ENCODE measurements at regions of chr16 and their contacts with region 1.

Region 1: DNA sequence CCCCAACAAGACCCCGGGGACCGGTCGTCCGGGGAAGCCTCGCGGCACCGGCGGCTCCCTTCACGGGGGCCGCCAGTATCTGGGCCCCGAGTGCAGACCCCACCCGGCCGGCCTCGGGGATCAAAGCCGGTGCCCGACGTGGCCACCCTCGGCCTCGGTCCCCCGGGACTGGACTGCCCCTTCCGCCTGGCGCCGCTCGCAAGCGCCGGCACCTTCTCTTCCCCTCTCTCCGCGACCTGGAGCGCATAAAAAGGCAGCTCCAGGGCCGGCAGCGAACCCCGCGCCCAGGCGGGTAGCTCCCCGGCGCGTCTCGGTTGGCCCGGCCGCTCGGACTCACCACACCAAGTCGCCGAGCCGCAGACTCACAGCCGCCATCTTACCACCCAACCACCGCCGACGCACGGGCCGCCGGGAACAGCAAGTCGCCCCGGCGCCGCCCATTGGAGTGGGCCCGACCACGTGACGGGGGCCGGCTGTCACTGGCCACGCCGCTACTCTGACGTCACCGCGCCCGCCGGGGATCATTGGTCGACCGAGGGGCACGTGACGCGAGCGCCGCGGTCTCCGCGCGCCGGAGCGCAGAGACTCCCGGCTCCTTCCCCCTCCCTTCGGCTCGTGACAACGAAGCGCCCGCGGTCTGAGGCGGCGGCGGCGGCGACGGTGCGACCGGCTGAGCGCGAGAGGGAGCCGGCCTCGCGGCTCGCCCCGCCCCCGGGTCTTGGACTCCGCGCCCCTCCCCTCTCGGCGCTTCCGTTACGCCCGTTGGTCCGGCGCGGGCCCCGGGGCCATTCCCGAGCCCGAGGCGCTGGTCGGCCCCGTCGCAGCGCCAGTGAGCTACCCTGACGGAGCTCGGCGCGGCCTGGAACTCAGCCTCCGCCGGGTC is at the starts of genes GLYR1 and UBN1:
- DNase-seq: peak; percentile 100
- H3K4me3 ChIP-seq: peak within 1 kb of the TSS; percentile 78 to 99 (median 90)
- H3K27ac ChIP-seq: peak within 1 kb of the TSS; percentile 99 to 100 (median 100)
- H3K4me1 ChIP-seq: peaks cover 26 to 57% (median 42%) of the 10 kb centered on the region in 4 donors
- H3K27me3 ChIP-seq: no peaks in the 10 kb centered on the region
- CTCF ChIP-seq: no peak
- EP300 ChIP-seq: no peak
- POLR2A ChIP-seq: peak; percentile 86
- total RNA-seq, gene GLYR1: 50.2 to 88.4 (median 74.0) TPM
- total RNA-seq, gene UBN1: 33.6 to 60.2 (median 53.0) TPM

Region 2: DNA sequence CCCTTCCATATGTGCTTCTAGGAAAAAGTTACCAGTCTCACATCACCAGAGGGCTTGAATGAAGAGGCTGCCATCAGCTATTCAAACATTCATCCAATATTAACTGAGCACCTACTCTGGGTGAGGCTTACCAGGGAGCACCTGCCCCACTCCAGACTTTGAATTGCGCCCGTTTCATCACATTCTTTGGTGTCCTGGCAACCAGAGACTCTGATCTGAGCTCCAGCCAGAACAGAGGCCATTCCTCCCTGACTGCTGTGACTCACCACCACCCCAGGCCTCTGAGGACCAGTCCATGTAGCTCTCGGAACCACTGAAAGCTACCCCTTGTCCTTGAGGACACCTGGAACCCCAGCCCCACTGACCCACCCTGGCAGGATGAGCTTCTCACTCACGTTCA is 291.0 kb before region 1 on chr16 and contains the start of gene C16orf96:
- in situ Hi-C with region 1: no loop called
- intact Hi-C with region 1: no loop called
- DNase-seq: no peak
- H3K4me3 ChIP-seq: no peak within 1 kb of the TSS
- H3K27ac ChIP-seq: no peak within 1 kb of the TSS
- H3K4me1 ChIP-seq: no peaks in the 10 kb centered on the region
- H3K27me3 ChIP-seq: no peaks in the 10 kb centered on the region
- CTCF ChIP-seq: no peak
- EP300 ChIP-seq: no peak
- POLR2A ChIP-seq: no peak
- total RNA-seq, gene C16orf96: not detected

Region 3: DNA sequence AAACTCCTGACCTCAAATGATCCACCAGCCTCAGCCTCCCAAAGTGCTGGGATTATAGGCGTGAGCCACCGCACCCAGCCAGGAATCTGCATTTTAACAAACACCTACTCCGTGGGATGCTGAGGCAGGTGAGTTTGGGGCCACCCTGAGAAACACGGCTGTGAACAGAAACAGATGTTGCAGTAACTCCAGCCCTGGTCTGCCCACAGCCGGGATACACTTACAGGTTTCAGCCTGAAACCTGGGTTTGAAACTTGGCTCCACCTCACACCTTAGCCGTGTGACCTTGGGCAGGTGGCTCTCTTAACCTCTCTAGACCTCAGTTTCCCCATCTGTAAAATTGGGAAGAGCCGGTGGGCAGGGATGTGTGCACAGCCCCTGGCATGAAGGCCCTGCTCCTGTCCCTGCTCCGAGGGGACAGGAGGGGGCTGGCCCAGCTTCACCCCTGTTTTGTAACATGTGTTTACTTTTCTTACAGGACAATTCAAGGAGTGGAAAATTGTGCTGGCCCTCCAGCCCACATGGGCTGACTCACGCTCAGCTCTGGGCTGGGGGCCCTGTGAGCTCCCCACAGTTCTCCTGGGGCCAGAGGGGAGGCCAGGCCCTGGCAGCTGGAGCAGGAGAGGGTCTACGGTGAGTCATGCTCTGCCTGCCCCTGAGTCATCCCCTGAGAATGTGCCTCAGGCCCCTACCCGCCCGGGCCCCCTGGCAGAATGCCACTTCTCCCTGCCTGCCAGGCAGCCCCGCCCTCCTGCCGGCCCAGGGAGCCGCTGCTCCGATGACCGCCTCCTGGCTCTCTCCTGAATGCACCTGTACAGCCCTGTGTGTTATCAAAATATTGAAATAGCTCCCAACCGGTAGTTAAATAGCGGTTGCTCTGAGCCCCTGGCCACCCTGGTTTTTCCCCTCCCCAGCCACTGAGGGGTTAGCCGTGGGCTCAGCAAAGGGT is 97.5 kb after region 1 on chr16:
- in situ Hi-C with region 1: loop called in 1 of 4 experiments (anchors 10 kb)
- intact Hi-C with region 1: no loop called
- DNase-seq: peak; percentile 84
- H3K4me3 ChIP-seq: no peak overlapping the region
- H3K27ac ChIP-seq: peak overlapping the region; percentile 60 to 89 (median 79)
- H3K4me1 ChIP-seq: peaks cover 20 to 35% (median 29%) of the 10 kb centered on the region in 4 donors
- H3K27me3 ChIP-seq: no peaks in the 10 kb centered on the region
- CTCF ChIP-seq: no peak
- EP300 ChIP-seq: peak; percentile 27
- POLR2A ChIP-seq: no peak

Region 4: GRCh38 chr16:4957720-4958509 is 110.8 kb after region 1 on chr16 and contains the start of gene SEC14L5:
- in situ Hi-C with region 1: loop called in 1 of 4 experiments (anchors 10 kb)
- intact Hi-C with region 1: loop called (anchors 5 kb)
- DNase-seq: peak; percentile 98
- H3K4me3 ChIP-seq: peak within 1 kb of the TSS; percentile 20 to 55 (median 32)
- H3K27ac ChIP-seq: peak within 1 kb of the TSS; percentile 78 to 84 (median 84)
- H3K4me1 ChIP-seq: peaks cover 5 to 26% (median 12%) of the 10 kb centered on the region in 4 donors
- H3K27me3 ChIP-seq: no peaks in the 10 kb centered on the region
- CTCF ChIP-seq: peak in 1 of 5 experiments; percentile 22
- EP300 ChIP-seq: no peak
- POLR2A ChIP-seq: peak; percentile 88
- total RNA-seq, gene SEC14L5: 0.32 to 6.2 (median 0.53) TPM

Measured in transverse colon (tissue), 4 donors.